ENCODE measurements at regions of chr13 and their contacts with region 1.

Region 1: DNA sequence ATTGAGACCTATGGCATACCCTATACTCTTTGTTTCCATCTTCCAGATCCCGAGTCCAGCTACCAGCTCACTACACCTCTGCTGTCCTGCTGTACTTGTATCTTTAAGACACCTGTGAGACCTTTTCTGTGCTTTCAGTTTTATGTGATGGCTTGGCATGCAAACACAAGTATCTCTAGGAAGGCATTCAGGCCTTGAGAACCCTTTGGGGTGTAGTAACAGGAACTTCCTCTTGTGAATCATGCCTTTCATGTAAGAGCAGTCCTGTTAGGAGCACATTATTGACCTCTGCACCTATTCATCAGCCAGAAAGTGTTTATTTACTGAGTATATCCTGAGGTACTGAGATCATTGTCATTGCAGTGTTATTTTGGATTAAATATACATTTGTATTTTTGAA is 87.0 kb upstream of the HTR2A start:
- DNase-seq: peak; percentile 82
- ATAC-seq: peak; percentile 82
- H3K4me3 ChIP-seq: peak overlapping the region; percentile 10; the same call in 1 of the 2 replicates
- H3K27ac ChIP-seq: peak overlapping the region; percentile 82
- H3K4me1 ChIP-seq: peaks cover 32% of the 10 kb centered on the region
- H3K27me3 ChIP-seq: no peaks in the 10 kb centered on the region; a peak in 1 of 4 replicates
- CTCF ChIP-seq: no peak
- EP300 ChIP-seq: peak in 1 of 2 experiments; percentile 51; a peak in 1 of 4 replicates
- POLR2A ChIP-seq: no peak; the same call in 1 of the 2 replicates
- RAD21 ChIP-seq: peak; percentile 26; the same call in 1 of the 2 replicates

Region 2: GRCh38 chr13:47036291-47037008 is 52.6 kb after region 1 on chr13:
- CTCF ChIA-PET with region 1: no interaction called
- POLR2A ChIA-PET with region 1: no interaction called
- RAD21 ChIA-PET with region 1: no interaction called
- SMC1A ChIA-PET with region 1: no interaction called
- in situ Hi-C with region 1: no loop called
- intact Hi-C with region 1: loop called (anchors 1 kb)
- DNase-seq: peak; percentile 64
- ATAC-seq: peak; percentile 100
- H3K4me3 ChIP-seq: no peak overlapping the region; the same call in 1 of the 2 replicates
- H3K27ac ChIP-seq: peak overlapping the region; percentile 55
- H3K4me1 ChIP-seq: peaks cover 10% of the 10 kb centered on the region; the same call in 1 of the 2 replicates
- H3K27me3 ChIP-seq: no peaks in the 10 kb centered on the region
- CTCF ChIP-seq: no peak
- EP300 ChIP-seq: peak in 1 of 2 experiments; percentile 48; a peak in 1 of 4 replicates
- POLR2A ChIP-seq: no peak
- RAD21 ChIP-seq: no peak

Region 3: DNA sequence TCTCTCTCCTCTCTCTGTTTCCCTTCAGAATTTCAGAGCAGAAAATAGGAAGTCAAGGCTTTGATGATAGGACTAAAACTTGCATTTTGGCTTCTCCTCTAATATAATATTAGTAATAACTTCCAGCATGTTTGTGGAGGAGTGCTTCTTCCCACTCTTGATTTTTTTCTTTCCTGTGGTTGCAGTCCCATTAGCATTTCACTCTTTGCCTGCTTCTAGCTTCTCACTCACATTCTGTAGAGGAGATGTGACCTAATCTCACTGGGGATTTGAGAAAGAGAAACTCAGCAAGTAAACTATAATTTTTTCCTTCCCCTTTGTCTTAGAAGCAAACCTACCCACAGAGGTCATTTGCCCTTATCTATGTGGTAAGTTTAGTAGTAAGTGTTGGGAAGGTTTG is 82.3 kb after region 1 on chr13:
- CTCF ChIA-PET with region 1: no interaction called
- POLR2A ChIA-PET with region 1: no interaction called
- RAD21 ChIA-PET with region 1: no interaction called
- SMC1A ChIA-PET with region 1: no interaction called
- in situ Hi-C with region 1: no loop called
- intact Hi-C with region 1: no loop called
- DNase-seq: no peak
- ATAC-seq: no peak
- H3K4me3 ChIP-seq: no peak overlapping the region
- H3K27ac ChIP-seq: no peak overlapping the region
- H3K4me1 ChIP-seq: no peaks in the 10 kb centered on the region
- H3K27me3 ChIP-seq: no peaks in the 10 kb centered on the region
- CTCF ChIP-seq: no peak
- EP300 ChIP-seq: no peak
- POLR2A ChIP-seq: no peak
- RAD21 ChIP-seq: no peak

Region 4: GRCh38 chr13:47094734-47095434 is 111.0 kb after region 1 on chr13:
- CTCF ChIA-PET with region 1: no interaction called
- POLR2A ChIA-PET with region 1: no interaction called
- RAD21 ChIA-PET with region 1: no interaction called
- SMC1A ChIA-PET with region 1: no interaction called
- in situ Hi-C with region 1: no loop called
- intact Hi-C with region 1: loop called (anchors 2 kb)
- DNase-seq: peak; percentile 48
- ATAC-seq: peak; percentile 91
- H3K4me3 ChIP-seq: no peak overlapping the region
- H3K27ac ChIP-seq: no peak overlapping the region
- H3K4me1 ChIP-seq: peaks cover 6% of the 10 kb centered on the region; the same call in 1 of the 2 replicates
- H3K27me3 ChIP-seq: no peaks in the 10 kb centered on the region
- CTCF ChIP-seq: no peak
- EP300 ChIP-seq: 0 out of 4 replicates have a peak, but pooled peaks of 1 of the 2 experiments have one; percentile 35
- POLR2A ChIP-seq: no peak
- RAD21 ChIP-seq: no peak

Region 5: DNA sequence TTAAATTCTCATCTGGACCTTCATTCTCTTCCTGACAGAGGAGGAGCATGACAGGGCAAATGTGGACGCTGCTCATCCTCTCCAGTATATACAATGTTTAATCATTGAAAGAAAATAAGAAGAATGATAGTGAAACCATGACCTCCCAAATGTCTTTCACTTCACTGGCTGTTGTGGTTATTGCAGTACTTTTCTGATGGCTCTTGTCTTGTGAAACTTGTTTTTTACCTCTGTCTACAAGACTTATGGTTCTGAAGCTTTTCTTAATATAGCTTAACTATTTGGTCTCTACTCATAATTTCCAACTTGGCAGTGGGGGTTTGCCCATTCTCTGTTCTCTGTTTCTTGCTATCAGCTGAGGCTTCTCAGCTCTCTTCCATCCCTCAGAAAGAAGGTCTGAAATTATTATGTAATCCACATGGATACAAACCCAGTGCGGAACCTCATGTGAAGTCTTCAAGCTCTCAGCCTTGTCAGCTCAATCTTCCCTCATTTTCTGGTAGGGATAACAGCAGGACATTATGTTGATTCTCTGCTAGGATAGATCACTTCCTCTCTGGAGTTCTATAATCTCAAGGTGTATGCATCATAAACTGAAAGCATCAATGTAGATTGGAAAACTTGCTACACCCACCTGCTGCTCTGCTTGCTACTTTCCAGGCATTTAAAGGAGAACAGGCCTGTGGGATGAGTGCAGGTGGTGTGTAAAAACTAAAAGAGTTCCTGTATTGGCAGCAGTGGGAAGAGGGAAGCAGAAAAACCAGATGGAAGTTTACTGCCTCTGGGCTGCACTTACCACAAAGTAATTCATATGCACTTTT is 163.3 kb after region 1 on chr13:
- CTCF ChIA-PET with region 1: no interaction called
- POLR2A ChIA-PET with region 1: no interaction called
- RAD21 ChIA-PET with region 1: no interaction called
- SMC1A ChIA-PET with region 1: no interaction called
- in situ Hi-C with region 1: no loop called
- intact Hi-C with region 1: loop called (anchors 5 kb)
- DNase-seq: peak; percentile 55
- ATAC-seq: peak; percentile 91
- H3K4me3 ChIP-seq: no peak overlapping the region
- H3K27ac ChIP-seq: no peak overlapping the region
- H3K4me1 ChIP-seq: peaks cover 6% of the 10 kb centered on the region; the same call in 1 of the 2 replicates
- H3K27me3 ChIP-seq: no peaks in the 10 kb centered on the region
- CTCF ChIP-seq: no peak
- EP300 ChIP-seq: no peak
- POLR2A ChIP-seq: no peak
- RAD21 ChIP-seq: no peak

Region 6: GRCh38 chr13:47215741-47216140 is 231.9 kb after region 1 on chr13:
- CTCF ChIA-PET with region 1: no interaction called
- POLR2A ChIA-PET with region 1: no interaction called
- RAD21 ChIA-PET with region 1: no interaction called
- SMC1A ChIA-PET with region 1: no interaction called
- in situ Hi-C with region 1: no loop called
- intact Hi-C with region 1: no loop called
- DNase-seq: no peak
- ATAC-seq: no peak
- H3K4me3 ChIP-seq: no peak overlapping the region
- H3K27ac ChIP-seq: no peak overlapping the region
- H3K4me1 ChIP-seq: no peaks in the 10 kb centered on the region
- H3K27me3 ChIP-seq: no peaks in the 10 kb centered on the region
- CTCF ChIP-seq: no peak
- EP300 ChIP-seq: no peak
- POLR2A ChIP-seq: no peak
- RAD21 ChIP-seq: no peak